ENCODE measurements at regions of chr21 and their contacts with region 1.

Region 1: GRCh38 chr21:42524349-42525151 is 10.9 kb downstream of the SLC37A1 start:
- DNase-seq: peak in 6 of 14 experiments; percentile 16 to 63 (median 38)
- ATAC-seq: no peak
- H3K4me3 ChIP-seq: no peak overlapping the region
- H3K4me3 Mint-ChIP-seq: no peak overlapping the region
- H3K27ac ChIP-seq: no peak overlapping the region
- H3K27ac Mint-ChIP-seq: peak overlapping the region; percentile 65
- H3K4me1 ChIP-seq: peaks cover 37% of the 10 kb centered on the region
- H3K4me1 Mint-ChIP-seq: peaks cover 59% of the 10 kb centered on the region
- H3K27me3 ChIP-seq: no peaks in the 10 kb centered on the region
- H3K27me3 Mint-ChIP-seq: no peaks in the 10 kb centered on the region
- CTCF ChIP-seq: no peak

Region 2: GRCh38 chr21:42513985-42514882 is 10.3 kb before region 1 on chr21:
- CTCF ChIA-PET with region 1: interaction called, 3 read pairs
- POLR2A ChIA-PET with region 1: interaction called, 50 read pairs
- intact Hi-C with region 1: no loop called
- DNase-seq: peak; percentile 36 to 81 (median 53)
- ATAC-seq: peak; percentile 84
- H3K4me3 ChIP-seq: peak overlapping the region; percentile 82
- H3K4me3 Mint-ChIP-seq: peak overlapping the region; percentile 88
- H3K27ac ChIP-seq: peak overlapping the region; percentile 48 to 65
- H3K27ac Mint-ChIP-seq: peak overlapping the region; percentile 76
- H3K4me1 ChIP-seq: peaks cover 28% of the 10 kb centered on the region
- H3K4me1 Mint-ChIP-seq: peaks cover 31% of the 10 kb centered on the region
- H3K27me3 ChIP-seq: no peaks in the 10 kb centered on the region
- H3K27me3 Mint-ChIP-seq: no peaks in the 10 kb centered on the region
- CTCF ChIP-seq: no peak

Measured in CD4-positive, alpha-beta T cell (primary cell).